Mammary epithelial cell (primary cell): ENCODE measurements at regions of chr12 and their contacts with region 1.

Region 1: DNA sequence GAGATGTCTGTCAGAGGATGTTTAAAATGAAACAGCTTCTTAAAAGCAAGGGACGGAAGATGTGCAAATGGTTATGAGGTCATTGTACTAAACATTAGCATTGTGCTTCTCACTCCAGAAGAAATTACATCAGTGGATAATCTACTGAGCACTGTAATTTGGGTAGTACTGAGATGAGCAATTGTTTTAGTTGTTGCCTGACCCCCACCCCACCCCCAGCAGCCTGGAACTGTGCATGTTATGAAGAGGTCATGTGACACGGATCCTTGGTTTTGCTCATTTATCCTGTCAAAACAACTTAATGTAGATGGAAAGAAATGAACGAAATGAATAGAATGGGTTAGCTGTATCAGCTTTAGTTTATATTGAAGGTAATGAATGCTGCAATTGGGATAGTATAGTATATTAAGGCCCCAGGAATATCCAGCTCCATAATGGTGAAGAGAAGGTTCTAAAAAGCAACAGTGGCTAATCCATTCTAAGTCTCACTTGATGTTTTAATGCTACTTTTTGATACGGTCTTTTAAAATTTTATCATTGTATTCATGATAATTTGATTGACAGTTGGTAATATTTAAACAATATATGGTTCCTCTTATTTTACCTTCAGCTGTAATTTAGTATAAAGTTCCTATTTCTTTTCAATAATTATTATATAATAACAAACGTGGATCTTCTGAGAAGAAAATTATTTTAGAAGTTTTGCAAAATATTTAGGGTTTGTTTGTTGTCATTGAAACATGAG is 58.5 kb downstream of the WNK1 start:
- DNase-seq: no peak
- H3K4me3 ChIP-seq: no peak overlapping the region
- H3K27ac ChIP-seq: no peak overlapping the region
- H3K4me1 ChIP-seq: no peaks in the 10 kb centered on the region
- H3K27me3 ChIP-seq: no peaks in the 10 kb centered on the region
- CTCF ChIP-seq: no peak

Region 2: DNA sequence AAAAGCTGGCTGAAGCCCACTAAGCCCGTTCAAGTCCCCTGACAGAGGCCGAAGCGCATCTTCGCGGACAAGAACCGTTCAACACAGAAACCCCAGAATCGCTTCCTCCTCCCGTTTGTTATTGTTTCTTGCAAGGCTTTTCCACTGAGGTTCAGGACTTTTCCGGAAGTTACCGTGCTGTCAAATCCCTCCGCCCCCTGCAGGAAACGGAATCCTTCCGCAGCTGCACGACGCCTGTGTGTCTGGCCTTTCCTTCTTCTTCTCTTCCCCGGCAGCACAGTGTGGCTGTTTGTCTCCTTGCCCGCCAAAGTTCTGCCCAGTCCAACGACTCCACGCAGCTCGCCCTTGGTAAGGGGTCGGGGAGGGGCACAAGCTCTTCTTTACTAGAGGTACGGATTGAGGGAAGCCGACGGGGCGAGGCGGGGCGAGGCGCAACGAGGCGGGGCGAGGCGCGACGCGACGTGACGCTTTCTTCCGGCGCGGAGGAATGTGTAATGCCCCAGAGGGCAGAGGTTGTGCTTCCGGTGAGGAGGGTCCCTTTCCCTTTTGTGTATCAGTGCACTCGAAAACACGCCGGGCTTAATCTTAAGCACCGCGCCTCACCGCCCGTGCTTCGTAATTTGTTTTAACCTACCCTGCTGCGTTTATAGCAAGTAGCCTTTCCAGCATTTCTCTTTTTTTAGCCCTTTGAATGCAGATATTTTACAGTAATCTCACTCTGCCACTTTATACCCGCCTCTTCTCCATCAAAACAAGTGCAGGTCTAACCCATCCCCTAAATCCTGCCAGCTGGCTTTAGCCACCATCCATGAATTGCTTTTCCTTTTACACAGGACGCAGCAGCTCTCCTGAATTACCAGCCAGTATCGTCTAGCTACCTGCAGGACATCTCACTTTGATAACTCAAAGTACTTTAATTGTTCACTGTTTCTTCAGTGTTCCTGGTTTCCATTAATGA is 421.4 kb before region 1 on chr12 and contains the start of gene KDM5A:
- CTCF ChIA-PET with region 1: interaction called, 17 read pairs
- dilution Hi-C with region 1: no loop called
- in situ Hi-C with region 1: no loop called
- intact Hi-C with region 1: no loop called
- DNase-seq: peak; percentile 95
- H3K4me3 ChIP-seq: peak within 1 kb of the TSS; percentile 73 to 96 (median 83)
- H3K27ac ChIP-seq: peak within 1 kb of the TSS; percentile 89
- H3K4me1 ChIP-seq: peaks cover 19% of the 10 kb centered on the region
- H3K27me3 ChIP-seq: no peaks in the 10 kb centered on the region
- CTCF ChIP-seq: no peak
- total RNA-seq, gene KDM5A: 50.5 to 52.4 TPM

Region 3: GRCh38 chr12:575948-576612 is 234.8 kb before region 1 on chr12:
- CTCF ChIA-PET with region 1: interaction called, 5 read pairs
- dilution Hi-C with region 1: no loop called
- in situ Hi-C with region 1: loop called (anchors 5 kb)
- intact Hi-C with region 1: loop called (anchors 1 kb)
- DNase-seq: peak; percentile 64
- H3K4me3 ChIP-seq: no peak overlapping the region
- H3K27ac ChIP-seq: peak overlapping the region; percentile 85
- H3K4me1 ChIP-seq: peaks cover 39% of the 10 kb centered on the region
- H3K27me3 ChIP-seq: no peaks in the 10 kb centered on the region
- CTCF ChIP-seq: peak; percentile 89 to 98

Region 4: GRCh38 chr12:614411-614970 is 196.4 kb before region 1 on chr12:
- CTCF ChIA-PET with region 1: interaction called, 9 read pairs
- dilution Hi-C with region 1: no loop called
- in situ Hi-C with region 1: no loop called
- intact Hi-C with region 1: loop called (anchors 1 kb)
- DNase-seq: no peak
- H3K4me3 ChIP-seq: no peak overlapping the region
- H3K27ac ChIP-seq: no peak overlapping the region
- H3K4me1 ChIP-seq: peaks cover 8% of the 10 kb centered on the region
- H3K27me3 ChIP-seq: no peaks in the 10 kb centered on the region
- CTCF ChIP-seq: no peak

Region 5: DNA sequence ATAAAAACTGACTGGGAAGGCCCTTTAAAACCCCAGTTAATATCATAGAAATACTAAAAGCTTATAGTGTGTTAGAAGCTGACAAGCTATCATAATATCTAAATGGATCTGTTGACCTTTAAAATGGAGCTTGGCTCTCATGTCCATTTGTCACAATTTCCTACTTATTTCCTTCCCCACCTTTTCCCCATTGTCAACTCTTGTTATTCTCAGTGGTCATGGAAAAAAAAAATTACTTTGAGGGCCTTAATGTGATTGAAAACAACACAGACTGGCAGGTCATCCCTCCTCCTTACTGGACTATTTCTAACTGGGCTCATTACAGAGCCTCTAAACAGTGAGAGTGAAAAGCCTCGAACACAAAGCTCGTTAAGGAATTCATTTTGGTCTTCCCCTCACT is 72.1 kb before region 1 on chr12:
- CTCF ChIA-PET with region 1: no interaction called
- dilution Hi-C with region 1: no loop called
- in situ Hi-C with region 1: no loop called
- intact Hi-C with region 1: no loop called
- DNase-seq: no peak
- H3K4me3 ChIP-seq: no peak overlapping the region
- H3K27ac ChIP-seq: no peak overlapping the region
- H3K4me1 ChIP-seq: no peaks in the 10 kb centered on the region
- H3K27me3 ChIP-seq: no peaks in the 10 kb centered on the region
- CTCF ChIP-seq: no peak

Region 6: GRCh38 chr12:751192-751998 is 59.4 kb before region 1 on chr12:
- CTCF ChIA-PET with region 1: no interaction called
- dilution Hi-C with region 1: no loop called
- in situ Hi-C with region 1: no loop called
- intact Hi-C with region 1: loop called (anchors 10 kb)
- DNase-seq: peak; percentile 92
- H3K4me3 ChIP-seq: peak overlapping the region; percentile 49 to 58 (median 57)
- H3K27ac ChIP-seq: peak overlapping the region; percentile 59
- H3K4me1 ChIP-seq: peaks cover 14% of the 10 kb centered on the region
- H3K27me3 ChIP-seq: no peaks in the 10 kb centered on the region
- CTCF ChIP-seq: peak; percentile 63 to 80